ENCODE measurements at regions of chr18 and their contacts with region 1.

Region 1: DNA sequence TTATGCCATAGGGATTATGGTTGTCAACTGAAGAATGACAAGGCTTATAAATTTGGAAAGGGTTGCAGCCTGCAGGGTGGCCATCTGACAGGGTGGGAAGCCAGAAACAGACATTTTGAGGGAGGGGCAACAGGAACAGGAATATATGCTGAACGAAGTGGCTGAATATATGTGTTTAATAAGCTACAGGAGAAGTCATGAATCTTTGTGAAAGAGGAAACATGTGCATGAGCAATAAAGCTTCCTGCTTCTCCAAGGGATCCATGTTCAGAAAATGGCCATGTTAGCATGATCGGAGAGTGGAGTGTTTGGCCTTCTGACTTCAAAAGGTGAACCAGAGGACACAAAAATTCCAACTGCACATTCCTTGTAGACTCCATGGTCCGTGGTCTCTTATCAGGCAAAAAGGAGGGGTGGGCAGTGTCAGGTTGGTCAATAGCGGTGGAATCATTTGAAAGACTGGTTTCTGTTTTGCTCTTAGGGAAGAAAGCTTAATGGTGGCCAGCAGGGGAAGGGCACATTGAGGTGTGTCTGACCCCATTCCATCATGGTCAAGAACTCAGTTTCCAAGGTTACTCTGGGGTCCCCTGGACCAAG is 144.1 kb downstream of the SOCS6 start:
- DNase-seq: no peak
- ATAC-seq: no peak
- H3K4me3 Mint-ChIP-seq: no peak overlapping the region
- H3K27ac Mint-ChIP-seq: no peak overlapping the region
- H3K4me1 Mint-ChIP-seq: 0 out of 2 replicates have a peak, but pooled peaks cover 5% of the 10 kb centered on the region
- H3K27me3 Mint-ChIP-seq: no peaks in the 10 kb centered on the region
- CTCF ChIP-seq: no peak

Region 2: GRCh38 chr18:70195852-70196434 is 237.0 kb before region 1 on chr18:
- CTCF ChIA-PET with region 1: interaction called, 42 read pairs
- POLR2A ChIA-PET with region 1: interaction called, 3 read pairs
- DNase-seq: peak; percentile 10
- ATAC-seq: no peak
- H3K4me3 Mint-ChIP-seq: no peak overlapping the region
- H3K27ac Mint-ChIP-seq: no peak overlapping the region
- H3K4me1 Mint-ChIP-seq: no peaks in the 10 kb centered on the region
- H3K27me3 Mint-ChIP-seq: no peaks in the 10 kb centered on the region
- CTCF ChIP-seq: peak; percentile 24

Region 3: GRCh38 chr18:70421471-70422390 is 11.2 kb before region 1 on chr18:
- CTCF ChIA-PET with region 1: interaction called, 20 read pairs
- POLR2A ChIA-PET with region 1: no interaction called
- DNase-seq: no peak
- ATAC-seq: no peak
- H3K4me3 Mint-ChIP-seq: no peak overlapping the region
- H3K27ac Mint-ChIP-seq: no peak overlapping the region
- H3K4me1 Mint-ChIP-seq: peaks cover 30% of the 10 kb centered on the region
- H3K27me3 Mint-ChIP-seq: no peaks in the 10 kb centered on the region
- CTCF ChIP-seq: no peak